ENCODE measurements at regions of chr3 and their contacts with region 1.

Region 1: GRCh38 chr3:51836606-51837005 is 24.8 kb upstream of the IQCF2 start:
- DNase-seq: no peak
- H3K4me3 ChIP-seq: no peak overlapping the region
- H3K27ac ChIP-seq: no peak overlapping the region
- H3K4me1 ChIP-seq: no peaks in the 10 kb centered on the region
- H3K27me3 ChIP-seq: peaks cover 2% of the 10 kb centered on the region
- CTCF ChIP-seq: no peak

Region 2: GRCh38 chr3:51891242-51892039 is 54.8 kb after region 1 on chr3:
- CTCF ChIA-PET with region 1: no interaction called
- dilution Hi-C with region 1: loop called (anchors 5 kb)
- in situ Hi-C with region 1: no loop called
- intact Hi-C with region 1: no loop called
- DNase-seq: no peak
- H3K4me3 ChIP-seq: no peak overlapping the region
- H3K27ac ChIP-seq: no peak overlapping the region
- H3K4me1 ChIP-seq: peaks cover 11% of the 10 kb centered on the region
- H3K27me3 ChIP-seq: no peaks in the 10 kb centered on the region
- CTCF ChIP-seq: no peak

Measured in mammary epithelial cell (primary cell).